ENCODE measurements at regions of chr1 and their contacts with region 1.

Region 1: DNA sequence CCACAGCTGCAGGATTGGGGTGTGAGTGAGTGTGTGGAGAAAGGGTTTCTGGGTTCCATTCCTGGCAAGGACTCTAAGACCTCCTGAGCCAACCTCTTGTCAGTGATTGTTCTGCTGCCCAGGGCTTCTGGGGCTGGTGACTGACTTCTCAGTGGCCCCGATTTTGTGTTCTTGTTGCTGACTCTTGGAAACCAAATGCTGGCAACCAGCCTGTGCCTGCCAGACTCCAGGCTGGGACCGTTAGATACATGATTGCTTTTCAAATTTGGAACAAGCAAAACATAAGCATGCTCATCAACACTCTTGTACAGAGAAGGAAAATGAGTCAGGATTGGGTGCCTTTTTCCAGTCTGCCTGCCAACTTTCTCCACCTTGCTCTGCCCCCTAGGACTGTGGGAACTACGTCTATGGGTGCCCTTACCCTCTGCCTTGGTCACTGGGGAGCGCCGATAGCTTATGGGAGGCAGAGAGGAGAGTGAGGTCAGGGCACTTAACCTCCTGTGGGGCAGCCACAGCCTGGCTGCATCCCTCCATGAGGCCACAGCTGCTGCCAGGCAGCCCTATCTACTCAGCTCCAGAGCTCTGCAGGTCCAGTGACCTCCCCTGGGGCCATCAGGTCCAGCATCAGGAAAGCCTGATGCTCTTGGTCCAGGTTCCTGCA is 39.3 kb upstream of the EPS8L3 start:
- ATAC-seq: peak in 1 of 8 experiments; percentile 23
- H3K4me3 ChIP-seq: no peak overlapping the region
- H3K27ac ChIP-seq: no peak overlapping the region
- H3K4me1 ChIP-seq: peaks cover 5 to 7% of the 10 kb centered on the region in 2 donors

Region 2: DNA sequence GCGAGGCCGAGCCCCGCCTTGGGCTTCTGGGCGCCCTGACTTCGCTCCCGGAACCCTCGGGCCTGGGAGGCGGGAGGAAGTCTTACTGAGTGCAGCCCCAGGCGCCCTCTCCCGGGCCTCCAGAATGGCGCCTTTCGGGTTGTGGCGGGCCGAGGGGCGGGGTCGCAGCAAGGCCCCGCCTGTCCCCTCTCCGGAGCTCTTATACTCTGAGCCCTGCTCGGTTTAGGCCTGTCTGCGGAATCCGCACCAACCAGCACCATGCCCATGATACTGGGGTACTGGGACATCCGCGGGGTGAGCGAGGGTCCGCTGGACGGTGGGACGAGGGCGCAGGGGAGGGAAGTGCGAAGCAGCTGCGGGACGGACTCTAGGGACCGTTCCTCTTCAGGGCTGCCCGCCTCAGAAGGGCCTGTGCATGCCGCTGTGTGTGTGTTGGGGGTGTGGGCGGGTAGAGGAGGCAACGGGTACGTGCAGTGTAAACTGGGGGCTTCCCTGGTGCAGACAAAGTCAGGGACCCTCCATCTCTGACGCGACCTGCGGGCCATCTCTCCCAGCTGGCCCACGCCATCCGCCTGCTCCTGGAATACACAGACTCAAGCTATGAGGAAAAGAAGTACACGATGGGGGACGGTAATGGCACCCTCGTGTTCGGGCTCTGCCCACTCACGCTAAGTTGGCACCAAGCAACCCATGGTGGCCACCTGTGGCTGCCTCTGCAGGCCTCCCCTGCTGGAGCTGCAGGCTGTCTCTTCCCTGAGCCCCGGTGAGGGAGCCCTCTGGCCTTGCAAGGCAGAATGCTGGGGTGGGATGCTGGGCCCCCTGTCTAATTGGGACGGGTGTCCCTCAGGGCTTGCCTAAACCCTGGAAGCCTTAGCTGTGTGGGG is 115.2 kb before region 1 on chr1 and contains the start of gene GSTM1:
- in situ Hi-C with region 1: no loop called
- ATAC-seq: peak in 4 of 8 experiments; percentile 95 to 99 (median 98)
- H3K4me3 ChIP-seq: peak within 1 kb of the TSS in 3 of 5 donors; percentile 4 to 26 (median 22)
- H3K27ac ChIP-seq: no peak within 1 kb of the TSS
- H3K4me1 ChIP-seq: peaks cover 0 to 2% of the 10 kb centered on the region in 2 donors
- total RNA-seq, gene GSTM1: 2.6 to 5.2 (median 3.7) TPM in 3 of 8 experiments, not detected in the others

Region 3: DNA sequence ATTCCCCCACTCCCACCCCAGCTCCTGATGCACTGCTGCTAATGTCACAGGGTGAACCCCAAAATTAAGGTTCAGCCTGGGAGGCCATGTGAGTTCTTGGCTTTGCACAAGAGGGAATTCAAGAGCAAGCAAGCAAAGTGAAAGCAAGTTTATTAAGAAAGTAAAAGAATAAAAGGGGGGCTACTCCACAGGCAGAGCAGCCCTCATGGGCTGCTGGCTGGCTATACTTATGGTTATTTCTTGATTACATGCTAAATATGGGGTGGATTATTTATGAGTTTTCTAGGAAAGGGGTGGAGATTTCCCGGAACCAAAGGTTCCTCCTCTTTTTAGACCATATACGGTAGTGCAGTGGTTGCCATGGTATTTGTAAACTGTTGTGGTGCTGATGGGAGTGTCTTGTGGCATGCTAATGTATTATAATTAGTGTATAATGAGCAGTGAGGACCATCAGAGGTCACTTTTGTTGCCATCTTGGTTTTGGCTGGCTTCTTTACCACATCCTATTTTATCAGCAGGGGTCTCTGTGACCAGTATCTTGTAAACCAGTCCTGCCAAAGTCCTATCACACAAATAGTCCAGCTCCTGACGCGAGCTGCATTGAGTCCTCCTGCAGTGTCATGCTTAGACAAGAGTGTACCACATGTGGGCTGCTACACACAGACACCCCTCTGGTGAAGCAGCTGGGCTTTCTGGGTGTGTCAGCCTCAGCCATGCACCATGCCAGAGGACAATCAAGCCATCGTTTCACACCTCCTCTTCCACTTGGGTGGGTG is 61.2 kb after region 1 on chr1:
- in situ Hi-C with region 1: loop called in 1 of 9 experiments (anchors 10 kb)
- ATAC-seq: peak; percentile 76 to 98 (median 90)
- H3K4me3 ChIP-seq: no peak overlapping the region
- H3K27ac ChIP-seq: peak overlapping the region in 1 of 2 donors; percentile 67
- H3K4me1 ChIP-seq: peaks cover 5 to 19% of the 10 kb centered on the region in 2 donors

Region 4: GRCh38 chr1:110106013-110106941 is 303.2 kb after region 1 on chr1:
- in situ Hi-C with region 1: no loop called
- ATAC-seq: peak; percentile 82 to 97 (median 93)
- H3K4me3 ChIP-seq: no peak overlapping the region
- H3K27ac ChIP-seq: no peak overlapping the region
- H3K4me1 ChIP-seq: peaks cover 16 to 21% of the 10 kb centered on the region in 2 donors